ENCODE measurements at regions of chr4 and their contacts with region 1.

Region 1: GRCh38 chr4:102826890-102827673 is at the start of gene UBE2D3:
- DNase-seq: peak; percentile 96
- ATAC-seq: peak; percentile 54
- H3K4me3 Mint-ChIP-seq: no peak within 1 kb of the TSS
- H3K27ac Mint-ChIP-seq: no peak within 1 kb of the TSS
- H3K4me1 Mint-ChIP-seq: peaks cover 34% of the 10 kb centered on the region
- H3K27me3 Mint-ChIP-seq: no peaks in the 10 kb centered on the region
- total RNA-seq, gene UBE2D3: 388 to 409 TPM

Region 2: DNA sequence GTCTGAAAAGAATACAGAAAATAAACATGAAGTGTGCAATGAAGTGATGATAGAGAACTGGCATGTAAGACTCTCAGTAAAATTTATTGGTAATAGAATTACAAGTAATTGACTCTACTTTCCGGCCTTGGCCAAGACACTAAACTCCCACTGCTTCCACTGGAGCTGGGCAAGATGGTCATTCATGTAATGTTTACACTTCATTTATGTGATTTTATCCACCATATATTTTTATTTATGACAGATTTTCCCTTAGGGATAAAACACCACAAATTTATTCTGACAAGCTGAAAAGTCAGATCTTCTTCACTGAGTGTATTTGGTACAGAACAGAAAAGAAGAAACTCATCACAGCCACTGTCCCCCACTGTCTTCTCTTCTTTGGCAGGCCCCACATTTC is 673.7 kb before region 1 on chr4:
- CTCF ChIA-PET with region 1: no interaction called
- POLR2A ChIA-PET with region 1: no interaction called
- DNase-seq: no peak
- ATAC-seq: no peak
- H3K4me3 Mint-ChIP-seq: no peak overlapping the region
- H3K27ac Mint-ChIP-seq: no peak overlapping the region
- H3K4me1 Mint-ChIP-seq: no peaks in the 10 kb centered on the region
- H3K27me3 Mint-ChIP-seq: peaks cover 3% of the 10 kb centered on the region

Region 3: GRCh38 chr4:102586002-102586643 is 241.0 kb before region 1 on chr4:
- CTCF ChIA-PET with region 1: no interaction called
- POLR2A ChIA-PET with region 1: no interaction called
- DNase-seq: no peak
- ATAC-seq: peak; percentile 52
- H3K4me3 Mint-ChIP-seq: peak overlapping the region; percentile 33
- H3K27ac Mint-ChIP-seq: peak overlapping the region; percentile 88
- H3K4me1 Mint-ChIP-seq: peaks cover 91% of the 10 kb centered on the region
- H3K27me3 Mint-ChIP-seq: no peaks in the 10 kb centered on the region

Region 4: DNA sequence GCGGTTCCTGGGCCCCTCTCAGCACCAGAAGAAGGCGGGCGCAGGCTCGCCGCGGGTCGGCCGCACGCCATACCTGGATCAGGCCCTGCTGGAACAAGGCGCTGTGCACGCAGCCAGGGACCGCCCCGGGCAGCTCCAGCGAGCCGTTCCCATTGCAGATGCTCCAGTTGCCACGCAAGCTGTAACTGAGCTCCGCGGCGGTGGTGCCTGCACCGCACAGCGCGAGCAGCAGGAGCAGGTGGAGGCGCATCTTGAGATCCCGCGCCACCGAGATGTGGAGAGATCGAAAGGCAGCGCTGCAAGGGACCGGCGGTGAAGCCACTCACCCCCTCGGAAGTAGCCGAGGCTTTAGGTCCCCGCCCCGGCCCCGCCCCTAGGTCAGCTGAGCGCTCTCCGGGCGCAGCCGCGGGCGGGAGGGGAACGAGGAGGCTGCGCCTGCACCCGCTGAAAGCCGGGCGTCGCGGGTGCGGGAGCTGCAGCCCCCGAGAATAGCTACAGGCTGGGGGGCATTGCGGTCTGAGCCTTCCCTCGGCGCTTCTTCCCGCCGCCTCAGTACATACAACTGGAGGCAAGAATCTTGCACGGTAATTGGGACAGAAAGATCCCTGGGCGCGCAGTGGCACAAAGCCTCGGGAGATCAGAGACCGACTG is 66.3 kb before region 1 on chr4 and contains the start of gene MANBA:
- CTCF ChIA-PET with region 1: interaction called, 3 read pairs
- POLR2A ChIA-PET with region 1: interaction called, 26 read pairs
- DNase-seq: peak; percentile 91
- ATAC-seq: peak; percentile 97
- H3K4me3 Mint-ChIP-seq: peak within 1 kb of the TSS; percentile 92
- H3K27ac Mint-ChIP-seq: peak within 1 kb of the TSS; percentile 85
- H3K4me1 Mint-ChIP-seq: peaks cover 31% of the 10 kb centered on the region
- H3K27me3 Mint-ChIP-seq: no peaks in the 10 kb centered on the region
- total RNA-seq, gene MANBA: 15.1 to 16.6 TPM

Region 5: GRCh38 chr4:102815981-102816380 is 11.1 kb before region 1 on chr4:
- CTCF ChIA-PET with region 1: interaction called, 17 read pairs
- POLR2A ChIA-PET with region 1: interaction called, 62 read pairs
- DNase-seq: no peak
- ATAC-seq: no peak
- H3K4me3 Mint-ChIP-seq: no peak overlapping the region
- H3K27ac Mint-ChIP-seq: no peak overlapping the region
- H3K4me1 Mint-ChIP-seq: peaks cover 83% of the 10 kb centered on the region
- H3K27me3 Mint-ChIP-seq: no peaks in the 10 kb centered on the region

Region 6: DNA sequence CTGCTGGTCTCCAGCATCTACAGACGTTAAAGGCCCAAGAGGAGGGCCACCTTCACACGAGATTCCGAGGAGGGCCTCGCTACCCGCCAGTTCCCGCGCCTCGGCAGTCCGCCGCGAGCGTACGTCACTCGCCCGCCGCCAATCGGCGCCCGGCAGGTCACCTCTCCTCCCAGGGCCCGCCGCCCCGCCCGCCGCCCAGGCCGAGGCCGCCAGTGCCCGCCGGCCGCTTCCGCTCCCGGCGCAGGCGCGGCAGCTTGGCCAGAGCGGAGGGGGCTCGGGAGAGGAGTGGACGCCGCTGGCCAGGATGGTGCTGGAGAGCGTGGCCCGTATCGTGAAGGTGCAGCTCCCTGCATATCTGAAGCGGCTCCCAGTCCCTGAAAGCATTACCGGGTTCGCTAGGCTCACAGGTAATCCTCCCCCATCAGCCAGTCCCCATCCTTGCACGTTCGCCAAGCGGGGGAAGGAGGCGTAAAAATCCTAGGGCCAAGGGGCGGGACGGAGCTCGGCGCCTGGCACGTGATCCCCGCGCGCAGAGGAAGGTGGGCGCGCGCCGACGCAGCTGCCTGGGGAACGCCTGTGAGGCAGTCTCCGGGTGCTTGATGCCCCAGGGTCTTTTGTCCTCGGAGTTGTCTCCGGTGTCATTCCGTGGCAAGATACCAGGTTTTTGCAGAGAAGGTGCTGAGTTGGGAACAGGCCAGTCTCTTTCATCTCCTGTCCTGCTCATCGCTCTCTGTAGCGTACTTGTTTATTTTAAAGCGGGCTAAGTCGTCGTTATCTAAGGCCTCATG is 41.9 kb after region 1 on chr4 and contains the start of gene CISD2:
- CTCF ChIA-PET with region 1: interaction called, 48 read pairs
- POLR2A ChIA-PET with region 1: interaction called, 346 read pairs
- DNase-seq: peak; percentile 95
- ATAC-seq: peak; percentile 88
- H3K4me3 Mint-ChIP-seq: peak within 1 kb of the TSS; percentile 98
- H3K27ac Mint-ChIP-seq: peak within 1 kb of the TSS; percentile 98
- H3K4me1 Mint-ChIP-seq: peaks cover 62% of the 10 kb centered on the region
- H3K27me3 Mint-ChIP-seq: no peaks in the 10 kb centered on the region
- total RNA-seq, gene CISD2: 37.7 to 40.0 TPM

Region 7: GRCh38 chr4:103108542-103108941 is 281.5 kb after region 1 on chr4:
- CTCF ChIA-PET with region 1: no interaction called
- POLR2A ChIA-PET with region 1: no interaction called
- DNase-seq: no peak
- ATAC-seq: no peak
- H3K4me3 Mint-ChIP-seq: no peak overlapping the region
- H3K27ac Mint-ChIP-seq: no peak overlapping the region
- H3K4me1 Mint-ChIP-seq: peaks cover 6% of the 10 kb centered on the region
- H3K27me3 Mint-ChIP-seq: no peaks in the 10 kb centered on the region

Measured in activated CD8-positive, alpha-beta T cell treated with anti-CD3 and anti-CD28 coated beads, Interleukin-2, amount 10 ng/mL, durations not matched to agents 7 days and 5 days (primary cell).